ENCODE measurements at regions of chr9 and their contacts with region 1.

Region 1: GRCh38 chr9:129626079-129626624 is at the start of gene NTMT1:
- DNase-seq: peak; percentile 96
- ATAC-seq: peak; percentile 83
- H3K4me3 ChIP-seq: peak within 1 kb of the TSS; percentile 51 to 89 (median 88)
- H3K4me3 Mint-ChIP-seq: peak within 1 kb of the TSS; percentile 84
- H3K27ac ChIP-seq: peak within 1 kb of the TSS; percentile 70 to 99
- H3K27ac Mint-ChIP-seq: peak within 1 kb of the TSS; percentile 83
- H3K4me1 ChIP-seq: peaks cover 29 to 34% of the 10 kb centered on the region in 2 donors
- H3K4me1 Mint-ChIP-seq: peaks cover 50% of the 10 kb centered on the region
- H3K27me3 ChIP-seq: peaks cover 0 to 9% (median 3%) of the 10 kb centered on the region in 4 experiments
- H3K27me3 Mint-ChIP-seq: peaks cover 12% of the 10 kb centered on the region
- CTCF ChIP-seq: no peak
- total RNA-seq, gene NTMT1: 33.6 and 35.3 TPM in 2 replicates

Region 2: GRCh38 chr9:128947422-128948301 is 678.5 kb before region 1 on chr9 and contains the starts of genes DOLK and NUP188:
- CTCF ChIA-PET with region 1: no interaction called
- POLR2A ChIA-PET with region 1: no interaction called
- intact Hi-C with region 1: loop called (anchors 10 kb)
- DNase-seq: peak; percentile 98
- ATAC-seq: peak; percentile 86
- H3K4me3 ChIP-seq: peak within 1 kb of the TSS; percentile 64 to 95 (median 84)
- H3K4me3 Mint-ChIP-seq: peak within 1 kb of the TSS; percentile 97
- H3K27ac ChIP-seq: peak within 1 kb of the TSS; percentile 91 to 96
- H3K27ac Mint-ChIP-seq: peak within 1 kb of the TSS; percentile 98
- H3K4me1 ChIP-seq: peaks cover 15 to 18% of the 10 kb centered on the region in 2 donors
- H3K4me1 Mint-ChIP-seq: peaks cover 27% of the 10 kb centered on the region
- H3K27me3 ChIP-seq: no peaks in the 10 kb centered on the region
- H3K27me3 Mint-ChIP-seq: no peaks in the 10 kb centered on the region
- CTCF ChIP-seq: no peak
- total RNA-seq, gene DOLK: 11.1 and 12.2 TPM in 2 replicates
- total RNA-seq, gene NUP188: 83.6 and 93.2 TPM in 2 replicates

Region 3: DNA sequence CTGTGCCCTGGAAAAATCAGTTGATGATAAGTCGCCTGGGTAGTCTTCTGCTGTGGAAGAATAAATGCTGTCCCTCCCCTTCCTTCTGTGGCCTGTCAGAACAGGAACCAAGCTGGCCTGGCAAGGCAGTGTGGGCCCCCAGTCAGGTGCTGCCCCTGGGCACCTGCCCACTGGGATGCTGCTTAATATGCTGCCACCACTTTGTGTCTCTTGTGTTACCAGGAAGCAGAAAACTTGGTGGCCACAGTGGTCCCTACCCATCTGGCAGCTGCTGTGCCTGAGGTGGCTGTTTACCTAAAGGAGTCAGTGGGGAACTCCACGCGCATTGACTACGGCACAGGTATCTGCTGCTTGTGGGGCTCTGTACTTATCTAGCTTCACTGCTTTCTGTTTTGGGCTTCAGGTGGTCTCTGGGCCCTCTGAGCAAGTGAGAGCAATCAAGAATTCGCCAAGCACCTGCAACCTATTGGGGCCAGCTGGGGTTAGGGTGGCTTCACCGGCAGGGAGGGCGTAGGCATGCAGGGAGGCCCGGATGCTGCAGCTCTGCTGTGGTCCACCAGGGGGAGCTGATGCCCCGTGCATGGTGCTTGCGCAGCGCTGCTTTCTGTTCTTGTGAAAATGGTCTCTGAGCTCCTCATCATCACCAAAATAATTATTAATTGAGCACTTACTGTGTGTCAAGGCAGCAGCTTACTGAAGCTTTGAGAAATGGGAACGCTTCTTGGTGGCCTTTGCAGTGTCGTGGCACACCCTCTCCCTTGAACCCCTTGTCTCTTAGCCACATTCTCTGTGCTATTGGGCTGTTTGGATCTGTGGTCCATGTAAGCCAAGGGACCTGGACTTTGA is 494.6 kb before region 1 on chr9:
- CTCF ChIA-PET with region 1: interaction called, 269 read pairs
- POLR2A ChIA-PET with region 1: interaction called, 7 read pairs
- intact Hi-C with region 1: loop called (anchors 1 kb)
- DNase-seq: peak; percentile 85
- ATAC-seq: peak; percentile 99
- H3K4me3 ChIP-seq: no peak overlapping the region
- H3K4me3 Mint-ChIP-seq: no peak overlapping the region
- H3K27ac ChIP-seq: no peak overlapping the region
- H3K27ac Mint-ChIP-seq: peak overlapping the region; percentile 20
- H3K4me1 ChIP-seq: peaks cover 4 to 8% of the 10 kb centered on the region in 2 donors
- H3K4me1 Mint-ChIP-seq: peaks cover 5% of the 10 kb centered on the region
- H3K27me3 ChIP-seq: no peaks in the 10 kb centered on the region
- H3K27me3 Mint-ChIP-seq: no peaks in the 10 kb centered on the region
- CTCF ChIP-seq: peak; percentile 97

Region 4: DNA sequence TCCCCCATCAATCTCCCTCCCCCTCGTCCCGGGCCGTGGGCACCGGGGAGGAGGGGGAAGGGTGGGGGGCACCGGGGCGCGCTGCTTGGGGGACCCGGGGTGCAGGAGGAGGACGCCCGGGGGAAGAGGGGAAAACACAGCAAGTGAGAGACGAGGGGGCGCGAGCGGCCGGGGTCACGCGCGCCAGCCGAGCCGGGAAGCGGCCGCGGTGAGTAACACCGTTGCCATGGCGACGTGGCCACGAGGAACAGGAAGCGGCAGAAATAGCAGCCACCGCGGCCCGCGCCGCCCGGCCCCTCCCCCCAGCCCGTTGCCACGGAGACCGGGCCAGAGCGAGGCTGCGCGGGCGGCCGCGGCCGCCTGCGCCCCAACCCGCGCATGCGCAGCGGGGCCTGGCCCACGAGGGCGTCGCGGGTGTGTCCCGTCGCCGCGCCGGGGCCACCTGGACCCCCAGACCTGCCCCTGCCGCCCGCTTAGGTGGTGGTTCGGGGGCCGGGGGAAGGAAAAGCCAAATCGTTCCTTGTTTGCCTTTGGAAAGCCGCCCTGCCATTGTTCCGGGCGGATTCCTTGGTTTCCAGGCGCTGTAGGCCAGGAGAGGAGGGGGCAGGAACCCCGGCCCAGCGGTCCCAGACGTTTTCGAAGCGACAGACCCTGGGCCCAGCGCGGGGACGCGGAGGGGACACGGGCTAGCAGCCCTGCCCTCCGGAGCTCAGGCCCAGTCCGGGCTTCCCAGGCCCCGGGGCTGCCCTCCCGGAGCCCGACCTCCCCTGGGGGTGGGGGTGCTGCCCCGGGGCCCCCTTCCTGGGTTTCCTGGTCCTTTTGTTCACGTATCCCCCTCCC is 212.4 kb before region 1 on chr9:
- CTCF ChIA-PET with region 1: no interaction called
- POLR2A ChIA-PET with region 1: no interaction called
- intact Hi-C with region 1: loop called (anchors 1 kb)
- DNase-seq: peak; percentile 99
- ATAC-seq: peak; percentile 71
- H3K4me3 ChIP-seq: peak overlapping the region in 4 of 5 experiments; percentile 75 to 79 (median 77)
- H3K4me3 Mint-ChIP-seq: peak overlapping the region; percentile 91
- H3K27ac ChIP-seq: peak overlapping the region; percentile 99
- H3K27ac Mint-ChIP-seq: peak overlapping the region; percentile 100
- H3K4me1 ChIP-seq: peaks cover 18 to 25% of the 10 kb centered on the region in 2 donors
- H3K4me1 Mint-ChIP-seq: peaks cover 25% of the 10 kb centered on the region
- H3K27me3 ChIP-seq: no peaks in the 10 kb centered on the region
- H3K27me3 Mint-ChIP-seq: no peaks in the 10 kb centered on the region
- CTCF ChIP-seq: no peak

Region 5: DNA sequence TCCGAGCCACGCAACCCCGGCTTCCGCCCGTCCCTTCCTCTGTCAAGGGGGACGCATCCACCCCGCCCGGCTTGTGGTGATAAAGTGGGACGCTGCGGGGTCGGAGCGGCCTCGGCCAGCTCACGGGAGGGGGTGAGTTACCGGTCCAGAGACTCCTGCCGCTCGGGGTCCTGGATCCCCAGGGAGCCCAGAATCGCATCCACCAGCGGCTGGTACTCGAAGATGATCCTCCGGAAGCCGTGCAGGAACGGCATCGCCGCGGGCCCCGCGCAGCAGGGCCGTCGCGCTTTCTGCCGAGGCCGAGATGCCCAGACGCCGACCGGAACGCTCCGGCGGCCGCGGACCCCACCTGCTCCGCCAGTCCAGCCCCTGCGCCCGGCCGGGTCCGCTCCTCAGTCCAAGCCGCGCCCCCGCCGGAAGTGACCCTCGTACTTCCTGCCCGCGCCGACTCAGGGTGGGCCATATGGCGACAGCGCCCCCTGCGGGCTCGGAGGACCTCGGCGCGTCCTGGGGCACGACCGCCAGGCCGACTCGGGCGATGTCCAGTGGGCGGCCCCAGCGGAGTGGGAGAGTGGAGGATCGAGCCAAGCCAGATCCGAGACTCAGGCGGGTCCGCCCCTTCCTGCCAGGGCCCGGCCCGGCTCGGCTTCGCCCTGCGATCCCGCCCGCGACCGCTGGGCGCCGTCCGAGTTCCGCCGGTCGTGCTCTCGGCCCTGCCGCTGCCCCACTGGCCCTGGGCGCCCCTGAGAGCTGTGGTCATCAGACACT is 15.8 kb after region 1 on chr9 and contains the start of gene ASB6:
- CTCF ChIA-PET with region 1: interaction called, 66 read pairs
- POLR2A ChIA-PET with region 1: interaction called, 9 read pairs
- intact Hi-C with region 1: loop called (anchors 1 kb)
- DNase-seq: peak; percentile 96
- ATAC-seq: peak; percentile 95
- H3K4me3 ChIP-seq: peak within 1 kb of the TSS; percentile 61 to 91 (median 84)
- H3K4me3 Mint-ChIP-seq: peak within 1 kb of the TSS; percentile 87
- H3K27ac ChIP-seq: peak within 1 kb of the TSS; percentile 54 to 86
- H3K27ac Mint-ChIP-seq: peak within 1 kb of the TSS; percentile 91
- H3K4me1 ChIP-seq: peaks cover 12 to 17% of the 10 kb centered on the region in 2 donors
- H3K4me1 Mint-ChIP-seq: peaks cover 26% of the 10 kb centered on the region
- H3K27me3 ChIP-seq: no peaks in the 10 kb centered on the region
- H3K27me3 Mint-ChIP-seq: no peaks in the 10 kb centered on the region
- CTCF ChIP-seq: peak; percentile 100
- total RNA-seq, gene ASB6: 24.8 and 27.7 TPM in 2 replicates

Region 6: DNA sequence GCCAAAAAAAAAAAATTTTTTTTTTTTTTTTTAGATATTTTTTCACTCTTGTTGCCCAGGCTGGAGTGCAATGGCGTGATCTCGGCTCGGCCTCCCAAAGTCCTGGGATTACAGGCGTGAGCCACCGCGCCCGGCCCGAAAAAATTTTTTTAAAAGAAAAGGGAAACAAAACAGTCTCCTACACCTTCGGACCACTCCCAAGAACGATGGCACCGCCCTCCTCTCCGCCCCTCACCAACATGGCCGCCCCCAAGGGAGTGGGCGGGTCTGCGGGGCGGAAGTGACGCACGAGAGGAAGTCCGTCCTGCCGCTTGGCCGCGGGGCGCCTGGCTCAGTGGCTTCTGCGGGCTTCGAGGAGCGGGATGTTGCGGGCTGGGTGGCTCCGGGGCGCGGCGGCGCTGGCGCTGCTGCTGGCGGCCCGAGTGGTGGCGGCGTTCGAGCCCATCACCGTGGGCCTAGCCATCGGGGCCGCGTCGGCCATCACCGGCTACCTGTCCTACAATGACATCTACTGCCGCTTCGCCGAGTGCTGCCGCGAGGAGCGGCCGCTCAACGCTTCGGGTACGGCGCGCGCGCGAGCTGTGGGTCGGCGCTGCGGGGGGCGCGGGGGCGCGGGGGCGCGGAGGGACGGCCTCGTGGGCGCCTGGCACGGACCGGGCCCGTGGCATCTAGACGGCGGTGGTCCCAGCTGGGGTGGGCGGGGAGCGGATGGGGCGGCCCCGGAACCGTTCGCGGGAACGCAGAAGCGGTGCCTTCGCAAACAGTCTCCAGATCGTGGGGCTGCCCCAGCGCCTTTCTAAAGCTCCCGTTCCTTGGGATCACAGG is 176.9 kb after region 1 on chr9 and contains the start of gene TOR1B:
- CTCF ChIA-PET with region 1: no interaction called
- POLR2A ChIA-PET with region 1: no interaction called
- intact Hi-C with region 1: loop called (anchors 5 kb)
- DNase-seq: peak; percentile 98
- ATAC-seq: peak; percentile 94
- H3K4me3 ChIP-seq: peak within 1 kb of the TSS; percentile 41 to 96 (median 76)
- H3K4me3 Mint-ChIP-seq: peak within 1 kb of the TSS; percentile 96
- H3K27ac ChIP-seq: peak within 1 kb of the TSS; percentile 71 to 79
- H3K27ac Mint-ChIP-seq: peak within 1 kb of the TSS; percentile 95
- H3K4me1 ChIP-seq: peaks cover 6 to 13% of the 10 kb centered on the region in 2 donors
- H3K4me1 Mint-ChIP-seq: peaks cover 20% of the 10 kb centered on the region
- H3K27me3 ChIP-seq: no peaks in the 10 kb centered on the region
- H3K27me3 Mint-ChIP-seq: no peaks in the 10 kb centered on the region
- CTCF ChIP-seq: no peak
- total RNA-seq, gene TOR1B: 17.4 and 18.9 TPM in 2 replicates

Measured in B cell (primary cell).